ENCODE measurements at regions of chr19 and their contacts with region 1.

Region 1: GRCh38 chr19:57435062-57435978 is at the start of gene ZNF749:
- DNase-seq: peak; percentile 98
- H3K4me3 Mint-ChIP-seq: peak within 1 kb of the TSS; percentile 93
- H3K27ac Mint-ChIP-seq: peak within 1 kb of the TSS; percentile 70
- H3K4me1 Mint-ChIP-seq: peaks cover 26% of the 10 kb centered on the region
- H3K27me3 Mint-ChIP-seq: no peaks in the 10 kb centered on the region
- total RNA-seq, gene ZNF749: 8.2 to 9.9 TPM

Region 2: DNA sequence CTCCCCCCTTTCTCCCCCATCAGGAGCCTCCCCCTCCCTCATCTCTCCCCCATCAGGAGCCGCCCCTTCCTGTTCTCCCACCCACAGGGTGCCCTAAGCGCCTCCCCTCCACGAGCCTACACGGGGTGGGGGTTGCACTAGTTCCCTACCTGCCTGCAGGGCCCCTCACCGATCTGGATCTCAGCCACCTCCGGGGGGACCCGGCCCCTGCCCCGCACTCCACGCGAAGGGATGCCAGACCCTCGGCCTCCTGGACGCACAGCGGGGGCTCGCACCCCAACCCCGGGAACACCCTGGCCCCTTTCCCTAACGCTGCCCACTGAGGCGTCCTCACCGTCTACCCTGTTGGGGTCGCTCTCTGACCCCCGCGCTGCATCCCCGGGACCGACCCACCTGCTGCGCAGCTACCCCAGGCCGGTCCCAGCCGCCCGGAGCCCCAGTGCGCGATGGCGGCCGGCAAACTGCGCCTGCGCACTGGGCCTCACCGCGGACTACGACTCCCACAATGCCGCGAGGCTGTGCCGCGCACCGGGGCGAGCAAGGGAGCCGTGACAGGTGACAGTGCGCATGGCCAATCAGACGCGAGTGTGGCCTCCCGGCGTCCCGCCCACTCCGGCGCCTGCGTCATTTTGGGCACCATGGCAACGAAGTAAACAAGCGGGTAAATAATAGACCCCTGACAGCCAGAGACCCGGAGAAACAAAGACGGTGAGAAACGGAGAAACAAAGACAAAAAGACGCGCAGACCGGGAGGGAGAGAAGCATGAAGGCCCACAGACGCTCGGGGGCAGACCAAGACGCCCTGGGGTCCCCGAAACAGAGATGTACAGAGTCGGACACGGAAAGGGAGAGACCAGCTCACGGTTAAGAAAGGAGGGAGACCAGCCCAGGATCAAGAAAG is 662.7 kb after region 1 on chr19 and contains the start of gene ZSCAN18:
- CTCF ChIA-PET with region 1: no interaction called
- intact Hi-C with region 1: loop called (anchors 1 kb)
- DNase-seq: peak; percentile 95
- H3K4me3 Mint-ChIP-seq: peak within 1 kb of the TSS; percentile 85
- H3K27ac Mint-ChIP-seq: peak within 1 kb of the TSS; percentile 93
- H3K4me1 Mint-ChIP-seq: peaks cover 14% of the 10 kb centered on the region
- H3K27me3 Mint-ChIP-seq: no peaks in the 10 kb centered on the region
- total RNA-seq, gene ZSCAN18: 25.7 to 26.1 TPM

Measured in activated naive CD4-positive, alpha-beta T cell treated with anti-CD3 and anti-CD28 coated beads for 36 hours (primary cell).